ENCODE measurements at regions of chr20 and their contacts with region 1.

Region 1: GRCh38 chr20:62065669-62066338 is at the start of gene TAF4:
- DNase-seq: peak; percentile 75
- H3K4me3 ChIP-seq: peak within 1 kb of the TSS; percentile 80
- H3K27ac ChIP-seq: peak within 1 kb of the TSS; percentile 95
- H3K4me1 ChIP-seq: peaks cover 45% of the 10 kb centered on the region
- H3K27me3 ChIP-seq: no peaks in the 10 kb centered on the region
- CTCF ChIP-seq: no peak
- total RNA-seq, gene TAF4: 11.8 TPM

Region 2: DNA sequence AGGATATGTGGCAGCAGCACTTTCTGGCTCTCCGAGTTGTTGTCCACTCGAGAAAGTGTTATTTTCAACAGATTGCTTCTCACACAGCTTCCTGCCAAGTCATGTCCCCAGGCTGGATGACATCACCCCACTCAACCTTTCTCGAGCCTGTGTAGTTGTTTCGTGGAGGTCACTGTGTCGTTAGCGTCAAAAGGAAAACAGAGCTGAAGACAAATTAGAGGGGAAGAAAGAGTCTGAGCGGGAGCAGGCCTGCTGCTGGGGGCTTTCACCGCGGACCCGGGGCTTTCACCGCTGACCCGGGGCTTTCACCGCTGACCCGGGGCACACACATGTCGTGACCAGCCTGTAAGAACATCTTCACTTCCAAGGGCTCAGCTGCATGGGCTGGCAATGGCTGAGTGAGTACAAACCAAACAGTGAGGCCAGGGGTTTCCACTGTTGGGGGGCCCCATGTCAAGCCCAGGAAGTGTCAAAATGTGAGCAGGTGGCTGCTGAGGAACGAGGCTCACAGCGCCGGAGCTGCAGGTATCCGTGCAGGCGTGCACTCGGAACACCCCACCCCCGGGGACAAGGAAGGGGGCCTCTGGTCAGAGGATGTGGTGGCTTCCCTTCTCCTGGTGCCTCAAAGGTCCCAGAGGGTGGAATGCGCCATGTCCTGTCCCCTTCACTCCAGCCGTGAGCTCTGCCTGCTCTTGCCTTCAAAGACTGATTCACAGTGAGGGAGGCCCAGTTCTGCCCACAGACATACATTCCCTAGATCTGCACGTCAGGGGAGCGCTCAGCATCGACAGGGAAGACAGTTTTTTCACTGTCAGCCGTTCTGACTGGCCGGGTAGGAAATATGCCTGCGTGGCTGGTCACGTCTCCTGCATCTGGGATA is 366.1 kb before region 1 on chr20:
- intact Hi-C with region 1: no loop called
- DNase-seq: no peak
- H3K4me3 ChIP-seq: no peak overlapping the region
- H3K27ac ChIP-seq: no peak overlapping the region
- H3K4me1 ChIP-seq: peaks cover 4% of the 10 kb centered on the region
- H3K27me3 ChIP-seq: peaks cover 35% of the 10 kb centered on the region
- CTCF ChIP-seq: no peak

Region 3: GRCh38 chr20:61886721-61887594 is 178.8 kb before region 1 on chr20:
- intact Hi-C with region 1: no loop called
- DNase-seq: no peak
- H3K4me3 ChIP-seq: no peak overlapping the region
- H3K27ac ChIP-seq: no peak overlapping the region
- H3K4me1 ChIP-seq: no peaks in the 10 kb centered on the region
- H3K27me3 ChIP-seq: peaks cover 79% of the 10 kb centered on the region
- CTCF ChIP-seq: peak; percentile 73

Region 4: GRCh38 chr20:62121776-62122631 is 56.2 kb after region 1 on chr20 and contains the start of gene LSM14B:
- intact Hi-C with region 1: loop called (anchors 10 kb)
- DNase-seq: peak; percentile 97
- H3K4me3 ChIP-seq: peak within 1 kb of the TSS; percentile 87
- H3K27ac ChIP-seq: peak within 1 kb of the TSS; percentile 96
- H3K4me1 ChIP-seq: peaks cover 61% of the 10 kb centered on the region
- H3K27me3 ChIP-seq: peaks cover 22% of the 10 kb centered on the region
- CTCF ChIP-seq: no peak
- total RNA-seq, gene LSM14B: 51.6 TPM

Measured in left ventricle myocardium inferior (tissue), 1 donor.